T-cell (primary cell): ENCODE measurements at regions of chr21 and their contacts with region 1.

Region 1: DNA sequence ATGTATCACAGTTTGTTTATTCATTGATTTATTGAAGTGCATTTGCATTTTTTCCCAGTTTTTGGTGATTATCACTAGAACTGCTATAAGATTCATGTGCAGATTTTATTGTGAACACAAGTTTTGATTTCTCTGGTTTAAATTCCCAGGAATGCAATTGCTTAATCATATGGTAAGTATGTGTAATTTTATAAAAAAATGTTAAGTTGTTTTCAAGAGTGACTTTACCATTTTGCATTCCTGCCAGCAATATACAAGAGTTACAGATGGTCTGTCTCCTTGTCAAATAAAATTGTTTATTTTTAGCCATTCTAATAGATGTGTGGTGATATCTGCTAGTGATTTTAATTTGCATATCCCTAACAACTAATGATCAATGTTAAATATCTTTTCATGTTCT is 127.3 kb upstream of the APP start:
- DNase-seq: no peak
- ATAC-seq: no peak
- H3K4me3 ChIP-seq: no peak overlapping the region
- H3K4me3 Mint-ChIP-seq: no peak overlapping the region
- H3K27ac ChIP-seq: no peak overlapping the region
- H3K27ac Mint-ChIP-seq: no peak overlapping the region
- H3K4me1 ChIP-seq: no peaks in the 10 kb centered on the region
- H3K4me1 Mint-ChIP-seq: no peaks in the 10 kb centered on the region
- H3K27me3 ChIP-seq: no peaks in the 10 kb centered on the region
- H3K27me3 Mint-ChIP-seq: no peaks in the 10 kb centered on the region

Region 2: GRCh38 chr21:26245428-26245827 is 52.4 kb before region 1 on chr21:
- CTCF ChIA-PET with region 1: interaction called in 1 of 2 experiments, 11 read pairs
- POLR2A ChIA-PET with region 1: no interaction called
- DNase-seq: no peak
- ATAC-seq: no peak
- H3K4me3 ChIP-seq: no peak overlapping the region
- H3K4me3 Mint-ChIP-seq: no peak overlapping the region
- H3K27ac ChIP-seq: no peak overlapping the region
- H3K27ac Mint-ChIP-seq: no peak overlapping the region
- H3K4me1 ChIP-seq: no peaks in the 10 kb centered on the region
- H3K4me1 Mint-ChIP-seq: no peaks in the 10 kb centered on the region
- H3K27me3 ChIP-seq: no peaks in the 10 kb centered on the region
- H3K27me3 Mint-ChIP-seq: peaks cover 2 to 8% of the 10 kb centered on the region in 2 donors

Region 3: DNA sequence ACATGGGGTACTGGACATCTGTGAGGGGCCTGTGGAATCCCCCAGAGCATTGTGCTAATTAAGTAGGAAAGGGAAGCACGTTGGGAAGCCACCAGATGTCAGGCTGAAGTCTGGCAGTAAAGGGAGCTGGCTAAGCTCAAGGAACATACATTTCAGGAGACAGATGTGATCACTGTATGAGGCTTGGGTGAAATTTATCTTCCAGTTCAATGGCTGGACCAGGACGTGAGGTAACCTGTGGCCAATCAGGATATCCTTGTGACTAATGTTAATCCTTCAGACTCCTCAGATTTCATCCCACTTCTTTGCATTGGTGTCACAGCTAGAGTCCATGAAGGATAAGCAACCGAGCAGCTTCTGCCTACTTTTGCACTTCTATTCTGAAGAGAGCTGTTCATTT is 17.1 kb before region 1 on chr21:
- CTCF ChIA-PET with region 1: no interaction called
- POLR2A ChIA-PET with region 1: no interaction called
- DNase-seq: no peak
- ATAC-seq: no peak
- H3K4me3 ChIP-seq: no peak overlapping the region
- H3K4me3 Mint-ChIP-seq: no peak overlapping the region
- H3K27ac ChIP-seq: no peak overlapping the region
- H3K27ac Mint-ChIP-seq: no peak overlapping the region
- H3K4me1 ChIP-seq: no peaks in the 10 kb centered on the region
- H3K4me1 Mint-ChIP-seq: no peaks in the 10 kb centered on the region
- H3K27me3 ChIP-seq: no peaks in the 10 kb centered on the region
- H3K27me3 Mint-ChIP-seq: peaks cover 0 to 19% of the 10 kb centered on the region in 2 donors